MCF 10A (cell line): ENCODE measurements at regions of chr1 and their contacts with region 1.

Region 1: DNA sequence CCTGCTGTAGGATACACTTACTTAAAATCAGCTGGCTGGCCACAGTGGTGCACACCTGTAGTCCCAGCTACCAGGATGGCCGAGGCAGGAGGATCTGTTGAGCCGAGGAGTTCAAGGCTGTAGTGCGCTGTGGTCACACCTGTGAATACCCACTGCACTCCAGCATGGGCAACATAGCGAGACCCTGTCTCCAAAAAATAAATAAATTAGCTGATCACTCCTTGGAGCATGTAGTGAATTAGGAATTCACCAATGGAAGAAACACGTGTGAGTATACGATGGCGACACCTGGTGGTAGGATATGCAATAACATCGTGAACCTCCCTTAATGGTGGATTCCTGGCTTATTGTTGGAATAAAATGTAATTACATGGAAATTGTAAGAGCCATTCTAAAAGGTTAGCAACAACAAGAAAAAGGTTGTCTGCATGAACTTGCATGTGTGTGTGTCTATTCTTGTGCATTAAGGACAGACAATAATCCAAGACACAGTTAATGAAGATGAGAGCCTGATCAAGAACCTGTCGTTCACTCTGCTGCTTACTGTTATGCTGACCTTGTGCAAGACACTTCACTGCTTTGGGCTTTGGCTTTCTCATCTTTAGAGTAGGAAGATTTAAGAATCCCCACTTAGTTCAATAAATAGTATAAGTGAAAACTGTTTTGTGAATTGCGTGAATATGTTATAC is 38.6 kb upstream of the COX20 start:
- DNase-seq: peak; percentile 89
- H3K4me3 Mint-ChIP-seq: no peak overlapping the region
- H3K27ac Mint-ChIP-seq: no peak overlapping the region
- H3K4me1 Mint-ChIP-seq: peaks cover 5% of the 10 kb centered on the region
- H3K27me3 Mint-ChIP-seq: no peaks in the 10 kb centered on the region
- CTCF ChIP-seq: peak; percentile 92

Region 2: DNA sequence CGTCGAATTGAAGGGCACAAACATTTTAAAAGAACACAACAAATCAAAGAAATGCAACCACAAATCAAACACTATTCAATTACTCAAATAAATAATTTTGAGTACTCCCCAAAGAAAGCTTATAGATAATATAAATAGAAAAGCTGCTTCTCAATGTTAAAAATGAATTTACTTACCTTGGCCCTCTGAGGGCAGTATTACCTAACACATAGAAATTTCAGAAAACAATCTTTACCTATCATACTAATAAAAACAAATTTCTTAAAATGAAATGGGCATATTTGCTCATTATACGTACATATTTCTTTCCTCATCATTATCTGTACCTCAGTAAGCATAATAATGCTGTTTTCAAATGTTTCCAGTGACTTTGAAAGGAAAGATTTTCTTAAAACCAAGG is 1088.7 kb before region 1 on chr1:
- CTCF ChIA-PET with region 1: interaction called, 3 read pairs
- POLR2A ChIA-PET with region 1: interaction called, 3 read pairs
- intact Hi-C with region 1: loop called (anchors 2 kb)
- DNase-seq: peak; percentile 32
- H3K4me3 Mint-ChIP-seq: no peak overlapping the region
- H3K27ac Mint-ChIP-seq: no peak overlapping the region
- H3K4me1 Mint-ChIP-seq: no peaks in the 10 kb centered on the region
- H3K27me3 Mint-ChIP-seq: no peaks in the 10 kb centered on the region
- CTCF ChIP-seq: peak; percentile 79

Region 3: DNA sequence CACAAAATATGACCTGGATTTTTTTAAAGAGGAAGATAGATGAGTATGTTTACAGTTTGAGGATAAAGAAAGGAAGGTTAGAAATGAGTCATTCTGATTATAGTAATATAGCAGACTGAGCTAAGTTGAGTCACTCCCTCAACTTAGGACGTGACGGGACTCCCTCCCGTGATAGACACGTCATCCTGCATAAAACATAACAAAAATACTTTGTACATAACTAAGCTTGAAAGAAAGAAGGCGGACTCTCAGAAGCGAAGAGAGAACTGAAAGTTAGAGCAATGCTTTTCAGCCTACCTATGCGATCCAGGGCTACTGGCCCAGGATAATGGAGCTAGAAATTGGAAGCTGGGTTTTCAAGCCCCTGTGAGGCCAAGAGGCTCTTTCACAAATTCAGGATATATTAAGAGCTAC is 196.9 kb before region 1 on chr1:
- CTCF ChIA-PET with region 1: interaction called, 494 read pairs
- POLR2A ChIA-PET with region 1: interaction called, 32 read pairs
- intact Hi-C with region 1: loop called (anchors 1 kb)
- DNase-seq: peak; percentile 97
- H3K4me3 Mint-ChIP-seq: peak overlapping the region; percentile 77
- H3K27ac Mint-ChIP-seq: peak overlapping the region; percentile 99
- H3K4me1 Mint-ChIP-seq: peaks cover 12% of the 10 kb centered on the region
- H3K27me3 Mint-ChIP-seq: no peaks in the 10 kb centered on the region
- CTCF ChIP-seq: no peak

Region 4: DNA sequence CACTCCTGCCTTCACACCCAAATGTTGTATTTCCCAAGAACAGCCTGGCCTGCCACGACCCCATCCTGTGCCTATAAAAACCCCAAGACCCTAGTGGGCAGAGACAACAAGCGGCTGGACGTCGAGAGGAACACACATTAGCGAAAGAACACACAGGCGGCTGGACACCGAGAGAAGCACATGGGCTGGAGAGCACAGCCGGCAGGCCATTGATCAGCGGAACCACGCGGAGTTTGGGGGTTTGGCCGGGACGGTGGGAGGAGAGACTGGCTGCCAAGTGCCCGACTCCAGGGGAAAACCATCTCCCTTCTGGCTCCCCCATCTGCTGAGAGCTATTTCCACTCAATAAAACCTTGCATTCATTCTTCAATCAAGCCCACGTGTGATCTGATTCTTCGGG is 154.3 kb before region 1 on chr1:
- CTCF ChIA-PET with region 1: interaction called, 25 read pairs
- POLR2A ChIA-PET with region 1: no interaction called
- intact Hi-C with region 1: no loop called
- DNase-seq: no peak
- H3K4me3 Mint-ChIP-seq: no peak overlapping the region
- H3K27ac Mint-ChIP-seq: no peak overlapping the region
- H3K4me1 Mint-ChIP-seq: no peaks in the 10 kb centered on the region
- H3K27me3 Mint-ChIP-seq: peaks cover 21% of the 10 kb centered on the region
- CTCF ChIP-seq: no peak

Region 5: GRCh38 chr1:244735404-244735803 is 61.5 kb before region 1 on chr1:
- CTCF ChIA-PET with region 1: interaction called, 21 read pairs
- POLR2A ChIA-PET with region 1: no interaction called
- intact Hi-C with region 1: no loop called
- DNase-seq: peak; percentile 66
- H3K4me3 Mint-ChIP-seq: no peak overlapping the region
- H3K27ac Mint-ChIP-seq: peak overlapping the region; percentile 92
- H3K4me1 Mint-ChIP-seq: peaks cover 23% of the 10 kb centered on the region
- H3K27me3 Mint-ChIP-seq: no peaks in the 10 kb centered on the region
- CTCF ChIP-seq: no peak

Region 6: GRCh38 chr1:244826712-244827111 is 29.9 kb after region 1 on chr1:
- CTCF ChIA-PET with region 1: interaction called, 19 read pairs
- POLR2A ChIA-PET with region 1: no interaction called
- intact Hi-C with region 1: no loop called
- DNase-seq: no peak
- H3K4me3 Mint-ChIP-seq: no peak overlapping the region
- H3K27ac Mint-ChIP-seq: no peak overlapping the region
- H3K4me1 Mint-ChIP-seq: peaks cover 6% of the 10 kb centered on the region
- H3K27me3 Mint-ChIP-seq: no peaks in the 10 kb centered on the region
- CTCF ChIP-seq: no peak